ENCODE measurements at regions of chr21 and their contacts with region 1.

Region 1: GRCh38 chr21:36209626-36210171 is 53.1 kb downstream of the DOP1B start:
- DNase-seq: peak; percentile 71
- H3K4me3 Mint-ChIP-seq: no peak overlapping the region
- H3K27ac Mint-ChIP-seq: no peak overlapping the region
- H3K4me1 Mint-ChIP-seq: peaks cover 12% of the 10 kb centered on the region
- H3K27me3 Mint-ChIP-seq: no peaks in the 10 kb centered on the region

Region 2: DNA sequence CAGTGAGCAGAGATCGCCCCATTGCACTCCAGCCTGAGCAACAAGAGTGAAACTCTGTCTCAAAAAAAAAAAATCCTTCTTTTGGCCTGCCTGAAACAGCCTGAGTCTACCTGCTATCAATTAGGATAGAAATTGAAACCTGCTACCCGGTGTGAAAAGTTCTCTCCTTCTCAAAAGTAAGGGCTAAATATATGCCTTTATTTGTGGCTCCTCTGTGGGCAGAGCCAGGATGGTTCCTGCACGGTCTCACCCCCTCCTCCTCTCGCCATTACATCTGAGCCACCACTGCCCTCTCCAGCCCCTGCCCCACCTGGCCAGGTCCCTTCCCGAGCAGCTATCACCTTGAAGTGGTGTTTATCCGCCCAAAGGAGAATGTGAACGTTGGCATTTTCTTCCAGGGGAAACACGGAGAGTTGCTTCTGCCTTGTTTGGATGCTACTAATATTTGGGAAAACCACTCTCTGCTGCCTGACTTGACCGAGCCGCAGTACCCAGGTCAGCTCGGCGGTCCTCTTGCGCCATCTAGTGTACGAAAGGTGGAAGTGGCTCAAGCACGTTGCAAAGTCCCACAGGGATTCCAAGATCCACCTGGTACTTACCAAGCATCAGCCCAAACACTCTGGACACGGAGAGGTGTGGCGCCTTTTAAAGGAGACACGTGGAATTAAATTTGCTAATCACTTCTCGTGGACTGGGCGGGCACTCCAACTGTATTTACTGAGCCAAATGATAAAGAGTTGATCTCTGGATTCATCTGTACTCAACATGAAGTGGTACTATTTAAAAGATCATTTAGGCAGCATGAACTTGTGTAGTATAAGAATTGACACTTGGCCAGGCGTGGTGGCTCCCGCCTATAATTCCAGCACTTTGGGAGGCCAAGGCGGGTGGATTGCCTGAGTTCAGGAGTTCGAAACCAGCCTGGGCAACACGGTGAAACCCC is 181.3 kb before region 1 on chr21:
- CTCF ChIA-PET with region 1: no interaction called
- intact Hi-C with region 1: no loop called
- DNase-seq: peak; percentile 78
- H3K4me3 Mint-ChIP-seq: no peak overlapping the region
- H3K27ac Mint-ChIP-seq: no peak overlapping the region
- H3K4me1 Mint-ChIP-seq: peaks cover 5% of the 10 kb centered on the region
- H3K27me3 Mint-ChIP-seq: no peaks in the 10 kb centered on the region

Region 3: DNA sequence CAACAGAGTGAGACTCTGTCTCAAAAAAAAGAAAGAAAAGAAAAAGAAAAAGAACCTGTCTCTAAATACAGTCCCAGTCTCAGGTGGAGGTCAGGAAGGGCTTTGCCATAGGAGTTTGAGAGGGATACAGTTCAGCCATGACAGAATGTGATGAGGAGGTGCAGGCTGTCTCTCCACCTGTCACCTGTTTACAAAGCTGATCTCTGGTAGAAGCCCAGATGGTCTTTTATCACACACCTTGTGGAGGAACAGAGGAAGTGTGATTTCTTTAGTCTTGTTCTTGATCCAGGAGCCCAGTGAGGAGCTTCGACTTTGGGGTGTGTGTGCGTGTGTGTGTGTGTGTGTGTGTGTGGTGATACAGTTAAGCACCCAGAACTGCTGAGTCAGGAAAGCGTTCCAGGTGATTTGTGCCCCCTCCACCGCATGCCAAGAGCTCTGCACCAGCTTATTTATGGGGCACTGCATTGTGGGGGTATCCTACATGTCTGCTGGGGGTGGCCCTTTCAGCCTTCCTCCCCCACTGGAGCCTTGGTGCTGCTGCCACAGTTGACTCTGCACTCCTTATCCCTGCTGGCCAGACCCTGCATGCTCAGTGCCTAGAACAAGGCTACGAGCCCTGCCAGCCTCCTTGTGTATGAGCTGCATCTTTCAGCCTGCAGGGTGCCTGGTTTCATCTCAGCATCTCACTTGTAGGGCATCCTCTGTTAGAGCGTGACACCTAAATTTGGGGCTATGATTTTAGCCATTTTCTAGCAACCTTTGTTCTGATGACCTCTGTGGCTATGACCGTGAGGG is 33.7 kb before region 1 on chr21:
- CTCF ChIA-PET with region 1: no interaction called
- intact Hi-C with region 1: loop called (anchors 2 kb)
- DNase-seq: no peak
- H3K4me3 Mint-ChIP-seq: no peak overlapping the region
- H3K27ac Mint-ChIP-seq: no peak overlapping the region
- H3K4me1 Mint-ChIP-seq: peaks cover 10% of the 10 kb centered on the region
- H3K27me3 Mint-ChIP-seq: no peaks in the 10 kb centered on the region

Region 4: GRCh38 chr21:36792505-36792967 is 582.8 kb after region 1 on chr21:
- CTCF ChIA-PET with region 1: no interaction called
- intact Hi-C with region 1: no loop called
- DNase-seq: peak; percentile 15
- H3K4me3 Mint-ChIP-seq: no peak overlapping the region
- H3K27ac Mint-ChIP-seq: no peak overlapping the region
- H3K4me1 Mint-ChIP-seq: no peaks in the 10 kb centered on the region
- H3K27me3 Mint-ChIP-seq: no peaks in the 10 kb centered on the region

Measured in activated naive CD4-positive, alpha-beta T cell treated with anti-CD3 and anti-CD28 coated beads for 36 hours (primary cell).